Transverse colon (tissue), 4 donors: ENCODE measurements at regions of chr10 and their contacts with region 1.

Region 1: GRCh38 chr10:43070121-43071085 is 6.5 kb upstream of the RET start:
- DNase-seq: no peak
- H3K4me3 ChIP-seq: no peak overlapping the region
- H3K27ac ChIP-seq: no peak overlapping the region
- H3K4me1 ChIP-seq: peaks cover 0 to 10% (median 0%) of the 10 kb centered on the region in 4 donors
- H3K27me3 ChIP-seq: peaks cover 8% of the 10 kb centered on the region
- CTCF ChIP-seq: no peak
- EP300 ChIP-seq: no peak
- POLR2A ChIP-seq: no peak

Region 2: GRCh38 chr10:43032613-43033012 is 37.8 kb before region 1 on chr10:
- in situ Hi-C with region 1: no loop called
- intact Hi-C with region 1: loop called (anchors 1 kb)
- DNase-seq: no peak
- H3K4me3 ChIP-seq: no peak overlapping the region
- H3K27ac ChIP-seq: no peak overlapping the region
- H3K4me1 ChIP-seq: no peaks in the 10 kb centered on the region
- H3K27me3 ChIP-seq: no peaks in the 10 kb centered on the region
- CTCF ChIP-seq: no peak
- EP300 ChIP-seq: no peak
- POLR2A ChIP-seq: no peak